HEK293T (cell line): ENCODE measurements at regions of chr12 and their contacts with region 1.

Region 1: DNA sequence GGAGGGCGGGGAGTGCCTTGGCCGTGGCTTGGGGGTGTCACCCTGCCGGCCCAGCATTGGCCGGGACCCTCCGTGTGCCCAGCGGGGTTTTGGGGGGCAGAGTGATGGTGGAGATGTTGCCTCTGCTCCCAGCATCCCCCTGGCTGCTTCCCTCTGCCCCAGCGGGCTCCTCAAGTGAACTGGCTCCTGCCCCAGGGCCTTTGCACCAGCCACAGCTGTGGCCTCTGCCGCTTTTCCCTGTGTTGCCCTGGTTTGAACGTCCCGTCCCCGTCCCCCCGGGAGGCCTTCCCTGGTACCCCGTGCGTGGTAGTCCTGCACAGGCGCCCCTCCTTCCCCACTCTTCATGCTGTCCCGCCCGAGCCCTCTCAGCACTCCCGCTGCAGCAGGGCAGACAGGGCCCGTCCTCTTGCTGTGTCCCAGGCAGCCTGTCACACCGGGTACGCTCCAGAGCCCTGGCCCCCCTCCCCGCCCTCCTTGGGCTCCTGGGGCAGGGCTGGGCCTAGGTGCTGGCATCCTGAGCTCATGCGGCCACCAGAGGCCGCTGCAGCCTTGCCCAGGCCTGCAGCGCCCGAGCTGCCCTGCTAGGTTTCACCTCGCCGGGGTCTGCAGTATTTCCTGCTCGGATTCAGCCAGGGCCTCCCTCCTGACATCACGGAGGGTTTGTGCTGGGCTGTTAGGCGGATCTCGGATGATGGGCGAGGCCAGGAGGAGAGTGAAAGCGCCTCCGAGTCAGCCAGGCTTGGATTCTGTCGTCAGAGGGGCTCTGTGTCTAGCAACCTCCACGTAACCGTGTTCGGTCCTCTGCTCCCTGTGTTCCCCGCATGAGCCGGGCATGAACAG is 9.5 kb downstream of the NOC4L start:
- DNase-seq: peak; percentile 86

Region 2: DNA sequence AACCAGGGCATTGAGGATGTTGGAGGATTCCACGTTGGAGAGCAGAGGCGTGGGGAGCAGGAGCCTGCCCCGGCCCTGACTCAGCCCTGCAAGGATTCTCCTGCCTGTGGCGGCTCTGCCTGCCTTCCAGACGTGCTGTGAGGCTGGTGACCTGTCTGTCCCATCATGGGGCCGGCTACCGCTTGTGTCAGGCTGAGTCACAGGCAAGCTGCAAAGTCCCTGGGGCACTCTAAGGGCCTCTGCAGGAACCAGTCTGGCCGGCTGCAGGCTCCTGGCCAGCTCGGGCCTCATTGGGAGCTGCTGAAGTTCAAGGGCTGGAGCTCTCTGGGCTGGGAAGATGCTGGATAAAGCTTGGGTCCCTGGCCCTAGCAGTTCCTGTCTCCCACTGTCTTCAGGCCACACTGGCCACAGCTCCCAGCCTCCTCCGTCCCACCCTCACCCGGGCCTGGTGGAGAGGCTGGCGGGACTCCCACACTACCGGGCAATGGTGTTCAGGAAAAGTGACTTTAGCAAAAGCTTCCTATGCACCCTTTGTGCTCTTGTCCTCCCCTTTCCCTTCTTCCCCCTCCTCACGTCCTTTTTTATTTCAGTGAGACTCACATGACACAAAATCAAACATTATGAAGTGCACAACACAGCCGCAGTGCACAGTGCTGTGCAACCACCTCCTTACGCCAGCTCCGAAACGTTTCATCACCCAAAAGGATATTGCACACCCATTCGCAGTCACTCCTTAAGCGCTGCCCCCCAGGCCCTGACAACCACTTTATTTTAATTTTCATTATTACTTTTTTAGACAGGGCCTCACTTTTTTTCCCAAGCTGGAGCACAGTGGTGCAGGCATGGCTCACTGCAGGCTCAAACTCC is 281.3 kb before region 1 on chr12:
- CTCF ChIA-PET with region 1: no interaction called
- POLR2A ChIA-PET with region 1: no interaction called
- DNase-seq: peak; percentile 12

Region 3: DNA sequence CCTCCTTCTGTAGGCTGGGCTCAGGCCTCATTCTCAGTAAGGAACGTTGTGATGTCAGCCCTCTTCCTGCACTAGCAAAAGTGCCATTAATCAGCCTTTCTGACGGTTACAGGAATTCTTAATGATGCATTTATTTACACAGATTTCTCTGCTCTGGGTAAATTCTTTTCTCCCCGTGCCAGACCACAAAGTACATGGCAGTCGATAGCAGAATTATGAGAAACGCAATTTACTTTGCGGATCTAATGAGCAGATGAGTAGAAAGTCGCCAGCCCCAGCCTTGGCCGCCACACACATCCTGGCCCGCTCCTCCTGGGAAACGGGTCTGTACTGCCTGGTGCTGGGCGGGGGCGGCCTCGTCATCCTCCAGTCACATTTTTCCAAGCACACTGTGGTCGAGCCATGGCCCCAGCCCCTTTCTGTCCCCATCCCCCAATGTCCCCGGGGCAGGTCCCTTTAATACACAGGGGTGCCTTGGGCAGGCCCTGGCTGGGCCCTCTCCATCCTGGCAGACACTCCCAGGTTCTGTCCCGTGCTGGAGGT is 16.4 kb after region 1 on chr12:
- CTCF ChIA-PET with region 1: no interaction called
- POLR2A ChIA-PET with region 1: no interaction called
- DNase-seq: no peak

Region 4: DNA sequence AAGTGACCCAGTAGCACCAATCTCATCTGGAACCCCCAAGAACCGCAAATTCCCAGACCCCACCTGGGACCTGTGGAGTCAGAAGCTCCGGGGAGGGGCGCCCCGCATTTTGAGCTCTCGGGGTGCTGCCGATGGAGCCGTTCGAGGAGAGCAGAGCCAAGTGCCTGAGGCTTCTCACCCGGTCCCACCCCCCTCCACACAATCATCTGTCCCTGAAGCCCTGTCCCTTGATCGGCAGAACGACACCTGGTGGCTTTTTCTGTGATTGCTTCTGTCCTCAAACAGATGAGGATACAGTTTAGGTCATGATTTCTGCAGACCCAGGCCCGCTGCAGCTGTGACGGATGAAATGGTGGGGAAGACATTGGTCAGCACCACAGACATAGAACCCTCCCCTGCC is 65.2 kb after region 1 on chr12:
- CTCF ChIA-PET with region 1: interaction called, 10 read pairs
- POLR2A ChIA-PET with region 1: interaction called, 3 read pairs
- DNase-seq: peak; percentile 81

Region 5: GRCh38 chr12:132414634-132415326 is 261.1 kb after region 1 on chr12:
- CTCF ChIA-PET with region 1: interaction called, 18 read pairs
- POLR2A ChIA-PET with region 1: no interaction called
- DNase-seq: peak; percentile 92